ENCODE measurements at regions of chr21 and their contacts with region 1.

Region 1: DNA sequence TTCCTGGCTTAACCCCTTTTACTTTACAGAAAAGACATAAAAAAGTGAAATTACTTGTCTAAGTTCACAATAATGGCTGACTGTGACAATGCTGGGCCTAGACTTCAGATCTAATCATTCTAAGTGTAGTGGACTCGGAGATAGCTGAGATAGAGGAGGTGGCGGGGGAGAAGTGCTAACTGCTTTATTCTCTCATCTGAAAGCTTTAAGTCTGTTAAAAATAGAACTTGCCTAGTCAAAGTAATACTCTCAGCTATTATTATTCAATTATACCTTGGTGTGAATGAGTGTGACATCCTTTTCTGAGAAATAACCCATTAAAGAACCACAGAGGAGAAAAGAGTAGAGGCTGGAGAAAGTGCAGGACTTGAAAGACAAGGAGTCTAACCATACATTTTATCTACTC is 96.1 kb upstream of the OLIG2 start:
- DNase-seq: no peak
- ATAC-seq: no peak
- H3K4me3 ChIP-seq: no peak overlapping the region
- H3K27ac ChIP-seq: no peak overlapping the region
- H3K4me1 ChIP-seq: no peaks in the 10 kb centered on the region
- H3K27me3 ChIP-seq: no peaks in the 10 kb centered on the region
- CTCF ChIP-seq: no peak
- POLR2A ChIP-seq: no peak

Region 2: GRCh38 chr21:33127154-33127893 is 197.7 kb after region 1 on chr21:
- intact Hi-C with region 1: no loop called
- DNase-seq: peak; percentile 45 to 69 (median 55)
- ATAC-seq: peak; percentile 64
- H3K4me3 ChIP-seq: no peak overlapping the region
- H3K27ac ChIP-seq: no peak overlapping the region
- H3K4me1 ChIP-seq: peaks cover 5% of the 10 kb centered on the region
- H3K27me3 ChIP-seq: no peaks in the 10 kb centered on the region
- CTCF ChIP-seq: peak; percentile 32 to 75 (median 59)
- POLR2A ChIP-seq: no peak

Region 3: DNA sequence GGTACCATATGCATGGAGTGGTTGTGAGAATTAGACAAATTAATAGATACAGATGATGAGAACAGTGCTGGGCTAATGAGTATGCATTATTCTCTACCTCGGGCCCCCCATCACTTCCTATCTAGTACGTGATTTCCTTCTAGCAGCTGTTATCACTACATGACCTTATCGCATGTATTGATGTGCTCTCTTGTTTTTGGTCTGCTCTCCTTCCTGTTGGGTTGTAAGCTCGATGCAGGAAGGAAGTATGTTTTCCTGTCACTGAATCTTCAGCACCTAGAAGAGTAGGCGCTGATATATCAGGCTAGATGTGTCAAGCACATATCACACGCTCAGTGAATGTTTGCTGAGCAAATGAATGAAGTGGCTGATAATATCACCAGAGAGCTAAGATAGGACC is 256.2 kb after region 1 on chr21:
- intact Hi-C with region 1: loop called (anchors 10 kb)
- DNase-seq: no peak
- ATAC-seq: no peak
- H3K4me3 ChIP-seq: no peak overlapping the region
- H3K27ac ChIP-seq: no peak overlapping the region
- H3K4me1 ChIP-seq: no peaks in the 10 kb centered on the region
- H3K27me3 ChIP-seq: no peaks in the 10 kb centered on the region
- CTCF ChIP-seq: no peak
- POLR2A ChIP-seq: no peak

Measured in body of pancreas (tissue), 4 donors.